Mammary epithelial cell (primary cell): ENCODE measurements at regions of chr3 and their contacts with region 1.

Region 1: DNA sequence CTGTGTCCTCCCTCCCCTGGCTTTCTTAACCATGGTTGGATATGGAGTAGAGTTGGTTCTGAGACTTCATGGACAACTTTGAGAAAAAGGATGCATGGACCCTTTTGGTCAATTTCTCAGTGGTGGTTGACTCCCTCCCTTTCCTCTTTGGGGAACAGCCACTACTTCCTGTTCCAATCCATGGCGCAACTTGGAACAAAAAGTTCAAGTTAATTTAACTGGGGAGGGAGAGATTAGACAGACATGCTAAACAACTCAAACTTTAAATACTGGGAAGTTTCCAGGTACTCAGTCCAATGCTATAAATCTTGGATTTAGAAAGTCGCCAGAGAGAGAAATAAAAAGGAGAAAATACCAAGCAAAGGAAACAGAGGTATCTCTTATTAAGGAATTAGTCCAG is 202.2 kb downstream of the PDZRN3 start:
- DNase-seq: no peak
- H3K4me3 ChIP-seq: no peak overlapping the region
- H3K27ac ChIP-seq: no peak overlapping the region
- H3K4me1 ChIP-seq: no peaks in the 10 kb centered on the region
- H3K27me3 ChIP-seq: no peaks in the 10 kb centered on the region
- CTCF ChIP-seq: no peak

Region 2: DNA sequence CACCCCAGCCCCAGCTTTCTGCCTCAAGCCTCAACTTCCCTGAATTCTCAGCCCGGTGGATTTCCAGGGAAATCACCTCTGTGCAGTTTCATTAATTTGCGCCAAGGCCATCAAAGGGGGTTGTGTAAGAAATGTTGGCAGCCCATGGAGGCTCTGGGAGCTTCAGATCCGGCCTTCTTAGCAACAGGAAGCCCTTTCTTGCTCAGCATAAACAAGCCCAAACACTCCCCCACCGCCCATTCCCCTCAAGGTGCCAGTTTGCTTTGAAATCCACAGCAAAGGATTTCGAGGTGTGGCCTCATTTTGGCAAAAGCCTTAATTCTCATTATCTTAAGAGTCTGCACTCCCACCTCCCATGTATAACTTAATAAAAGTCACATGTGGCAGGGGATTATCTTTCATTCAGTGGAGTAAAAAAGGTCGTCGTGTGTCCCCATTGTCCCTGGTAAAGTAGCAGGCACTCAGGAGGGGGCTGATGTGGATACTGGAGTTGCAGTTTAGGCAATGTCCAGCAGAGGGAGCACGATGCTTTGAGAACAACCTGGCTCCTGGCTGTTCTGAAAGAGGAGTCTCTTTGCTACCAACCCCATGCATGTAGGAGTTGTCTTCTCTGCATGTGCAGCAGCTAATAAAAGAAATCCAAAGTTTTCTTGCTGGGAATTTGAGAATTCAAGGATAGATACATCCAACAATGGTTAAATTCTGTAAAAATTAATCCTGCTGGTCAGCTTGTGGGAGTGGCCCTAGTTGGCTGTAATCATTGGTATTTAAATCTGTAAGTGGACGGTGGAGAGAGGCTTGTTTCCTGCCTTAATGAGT is 321.6 kb before region 1 on chr3:
- CTCF ChIA-PET with region 1: no interaction called
- dilution Hi-C with region 1: no loop called
- in situ Hi-C with region 1: loop called in 1 of 2 experiments (anchors 10 kb)
- intact Hi-C with region 1: no loop called
- DNase-seq: peak; percentile 61
- H3K4me3 ChIP-seq: no peak overlapping the region
- H3K27ac ChIP-seq: no peak overlapping the region
- H3K4me1 ChIP-seq: no peaks in the 10 kb centered on the region
- H3K27me3 ChIP-seq: no peaks in the 10 kb centered on the region
- CTCF ChIP-seq: peak; percentile 94 to 95

Region 3: DNA sequence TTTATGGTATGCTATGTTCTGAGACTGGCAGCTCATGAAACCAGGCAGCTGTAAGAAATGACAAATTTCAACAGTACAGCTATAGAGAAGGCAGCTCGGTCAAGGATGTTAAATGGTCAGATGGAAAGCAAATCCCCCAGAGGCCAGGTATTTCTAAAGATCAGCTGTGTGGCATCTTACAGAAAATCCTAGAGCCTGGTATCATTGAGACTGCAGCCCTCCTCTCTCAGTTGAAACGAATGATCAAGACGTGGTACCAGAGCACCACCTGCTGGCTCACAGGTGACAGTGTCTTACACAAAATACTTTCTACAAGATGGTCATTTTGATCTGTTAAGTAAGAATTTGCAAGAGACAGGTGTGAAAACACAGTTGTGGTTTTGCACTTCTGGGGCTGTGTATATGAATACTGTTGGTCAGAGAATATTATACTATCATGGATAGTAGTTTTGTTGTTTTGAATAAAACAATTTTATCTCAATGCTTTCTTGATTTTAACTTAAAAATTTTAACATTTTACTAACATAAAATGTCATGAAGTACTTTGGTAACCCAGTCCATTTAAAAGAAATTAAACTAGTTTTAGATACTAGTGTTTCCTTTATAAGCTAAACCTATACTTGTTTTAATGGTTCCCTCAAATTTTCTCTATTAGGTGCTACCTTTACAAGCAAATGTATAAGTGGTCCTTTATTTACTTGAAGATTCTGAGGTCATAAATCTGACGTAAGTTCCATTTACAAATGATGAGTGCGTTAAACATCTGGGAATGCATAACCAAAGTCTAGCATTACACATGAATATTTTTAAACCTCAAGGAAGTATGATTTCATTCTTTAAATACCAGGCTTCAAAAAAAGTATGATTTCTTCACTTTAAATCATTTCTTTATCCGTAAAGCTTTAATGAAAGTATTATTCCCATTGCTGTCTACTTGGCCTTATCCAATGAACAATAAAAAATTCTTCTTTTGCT is 80.3 kb after region 1 on chr3:
- CTCF ChIA-PET with region 1: no interaction called
- dilution Hi-C with region 1: no loop called
- in situ Hi-C with region 1: no loop called
- intact Hi-C with region 1: no loop called
- DNase-seq: peak; percentile 41
- H3K4me3 ChIP-seq: no peak overlapping the region
- H3K27ac ChIP-seq: no peak overlapping the region
- H3K4me1 ChIP-seq: no peaks in the 10 kb centered on the region
- H3K27me3 ChIP-seq: no peaks in the 10 kb centered on the region
- CTCF ChIP-seq: peak; percentile 78 to 92